ENCODE measurements at regions of chr6 and their contacts with region 1.

Region 1: DNA sequence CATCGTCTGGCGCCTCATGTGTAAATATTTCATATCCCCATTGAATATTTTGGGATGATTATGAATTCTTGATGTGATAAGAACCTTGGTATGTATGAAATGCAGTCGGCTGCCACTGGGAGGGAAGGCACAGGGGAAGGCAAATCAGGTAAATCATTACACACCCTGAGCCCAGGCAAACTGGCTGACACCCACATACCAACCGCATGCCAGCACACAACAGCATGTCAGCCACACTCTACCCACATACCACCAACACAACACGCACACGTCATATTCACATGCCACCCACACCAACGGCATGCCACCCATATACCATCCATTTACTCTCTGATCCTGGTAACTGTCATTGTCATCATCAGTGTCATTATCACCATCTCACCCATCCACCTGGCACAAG is 28.3 kb upstream of the MDGA1 start:
- DNase-seq: no peak
- H3K4me3 ChIP-seq: no peak overlapping the region
- H3K27ac ChIP-seq: no peak overlapping the region
- H3K4me1 ChIP-seq: no peaks in the 10 kb centered on the region
- H3K27me3 ChIP-seq: peaks cover 0 to 4% (median 0%) of the 10 kb centered on the region in 4 donors
- CTCF ChIP-seq: no peak
- EP300 ChIP-seq: no peak
- POLR2A ChIP-seq: no peak

Region 2: DNA sequence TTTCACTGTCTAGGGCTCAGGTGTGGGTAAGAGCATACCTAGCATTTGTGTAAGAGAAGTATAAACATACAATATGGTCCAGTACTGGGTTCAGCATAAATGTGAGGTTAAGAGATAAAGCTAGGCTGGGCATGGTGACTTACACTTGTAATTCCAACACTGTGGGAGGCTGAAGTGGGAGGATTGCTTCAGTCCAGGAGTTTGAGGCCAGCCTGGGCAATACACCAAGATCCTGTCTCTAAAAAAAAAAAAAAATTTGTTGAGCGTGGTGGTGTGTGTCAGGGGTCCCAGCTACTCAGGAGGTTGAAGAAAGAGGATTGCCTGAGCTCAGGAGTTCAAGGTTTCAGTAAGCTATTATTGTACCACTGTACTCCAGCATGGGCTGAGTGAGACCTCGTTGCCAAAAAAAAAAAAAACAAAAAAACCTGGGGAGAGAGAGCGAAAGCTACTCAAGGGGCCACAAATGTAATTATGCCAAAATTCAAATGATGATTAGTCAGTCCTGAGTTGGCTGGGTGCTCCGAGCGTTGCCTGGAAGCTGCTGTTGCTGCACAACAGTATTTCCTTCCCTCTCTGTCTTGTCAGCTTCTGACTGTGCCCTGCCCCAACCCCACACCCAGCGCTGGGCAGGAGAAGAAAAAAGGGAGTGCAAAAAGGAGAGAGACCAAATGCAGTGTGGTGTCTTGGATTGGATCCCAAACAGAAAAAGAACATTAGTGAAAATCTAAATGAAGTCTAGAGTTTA is 269.0 kb before region 1 on chr6:
- intact Hi-C with region 1: no loop called
- DNase-seq: no peak
- H3K4me3 ChIP-seq: no peak overlapping the region
- H3K27ac ChIP-seq: peak overlapping the region in 2 of 4 donors; percentile 18 to 22
- H3K4me1 ChIP-seq: peaks cover 0 to 45% (median 32%) of the 10 kb centered on the region in 4 donors
- H3K27me3 ChIP-seq: no peaks in the 10 kb centered on the region
- CTCF ChIP-seq: no peak
- EP300 ChIP-seq: no peak
- POLR2A ChIP-seq: no peak

Region 3: GRCh38 chr6:37838219-37838921 is 112.4 kb after region 1 on chr6:
- intact Hi-C with region 1: no loop called
- DNase-seq: no peak
- H3K4me3 ChIP-seq: no peak overlapping the region
- H3K27ac ChIP-seq: no peak overlapping the region
- H3K4me1 ChIP-seq: peaks cover 7 to 51% (median 32%) of the 10 kb centered on the region in 4 donors
- H3K27me3 ChIP-seq: no peaks in the 10 kb centered on the region
- CTCF ChIP-seq: no peak
- EP300 ChIP-seq: no peak
- POLR2A ChIP-seq: no peak

Region 4: GRCh38 chr6:37940074-37940847 is 214.3 kb after region 1 on chr6:
- intact Hi-C with region 1: no loop called
- DNase-seq: no peak
- H3K4me3 ChIP-seq: no peak overlapping the region
- H3K27ac ChIP-seq: no peak overlapping the region
- H3K4me1 ChIP-seq: peaks cover 35 to 72% (median 49%) of the 10 kb centered on the region in 4 donors
- H3K27me3 ChIP-seq: no peaks in the 10 kb centered on the region
- CTCF ChIP-seq: no peak
- EP300 ChIP-seq: no peak
- POLR2A ChIP-seq: no peak

Region 5: GRCh38 chr6:38671885-38672467 is 946.0 kb after region 1 on chr6:
- intact Hi-C with region 1: loop called (anchors 10 kb)
- DNase-seq: no peak
- H3K4me3 ChIP-seq: no peak overlapping the region
- H3K27ac ChIP-seq: no peak overlapping the region
- H3K4me1 ChIP-seq: no peaks in the 10 kb centered on the region
- H3K27me3 ChIP-seq: no peaks in the 10 kb centered on the region
- CTCF ChIP-seq: peak; percentile 55 to 70 (median 56)
- EP300 ChIP-seq: no peak
- POLR2A ChIP-seq: no peak